Right lobe of liver (tissue), 6 donors: ENCODE measurements at regions of chr6 and their contacts with region 1.

Region 1: GRCh38 chr6:35342258-35343091 is at the start of gene PPARD:
- DNase-seq: peak; percentile 99
- ATAC-seq: peak; percentile 98 to 100 (median 99)
- H3K4me3 ChIP-seq: peak within 1 kb of the TSS; percentile 88 to 94 (median 92)
- H3K27ac ChIP-seq: peak within 1 kb of the TSS; percentile 84 to 95 (median 85)
- H3K4me1 ChIP-seq: peaks cover 0 to 16% (median 6%) of the 10 kb centered on the region in 4 donors
- H3K27me3 ChIP-seq: no peaks in the 10 kb centered on the region
- CTCF ChIP-seq: peak; percentile 98 to 100 (median 99)
- POLR2A ChIP-seq: peak; percentile 93
- total RNA-seq, gene PPARD: 5.2 to 18.8 (median 5.9) TPM

Region 2: GRCh38 chr6:35402136-35402855 is 59.8 kb after region 1 on chr6:
- intact Hi-C with region 1: no loop called
- DNase-seq: peak; percentile 57 to 90 (median 77)
- ATAC-seq: peak; percentile 71 to 88 (median 86)
- H3K4me3 ChIP-seq: peak overlapping the region in 1 of 3 donors; percentile 16
- H3K27ac ChIP-seq: peak overlapping the region in 2 of 3 donors; percentile 25 to 57
- H3K4me1 ChIP-seq: peaks cover 0 to 35% (median 19%) of the 10 kb centered on the region in 4 donors
- H3K27me3 ChIP-seq: no peaks in the 10 kb centered on the region
- CTCF ChIP-seq: no peak
- POLR2A ChIP-seq: no peak

Region 3: DNA sequence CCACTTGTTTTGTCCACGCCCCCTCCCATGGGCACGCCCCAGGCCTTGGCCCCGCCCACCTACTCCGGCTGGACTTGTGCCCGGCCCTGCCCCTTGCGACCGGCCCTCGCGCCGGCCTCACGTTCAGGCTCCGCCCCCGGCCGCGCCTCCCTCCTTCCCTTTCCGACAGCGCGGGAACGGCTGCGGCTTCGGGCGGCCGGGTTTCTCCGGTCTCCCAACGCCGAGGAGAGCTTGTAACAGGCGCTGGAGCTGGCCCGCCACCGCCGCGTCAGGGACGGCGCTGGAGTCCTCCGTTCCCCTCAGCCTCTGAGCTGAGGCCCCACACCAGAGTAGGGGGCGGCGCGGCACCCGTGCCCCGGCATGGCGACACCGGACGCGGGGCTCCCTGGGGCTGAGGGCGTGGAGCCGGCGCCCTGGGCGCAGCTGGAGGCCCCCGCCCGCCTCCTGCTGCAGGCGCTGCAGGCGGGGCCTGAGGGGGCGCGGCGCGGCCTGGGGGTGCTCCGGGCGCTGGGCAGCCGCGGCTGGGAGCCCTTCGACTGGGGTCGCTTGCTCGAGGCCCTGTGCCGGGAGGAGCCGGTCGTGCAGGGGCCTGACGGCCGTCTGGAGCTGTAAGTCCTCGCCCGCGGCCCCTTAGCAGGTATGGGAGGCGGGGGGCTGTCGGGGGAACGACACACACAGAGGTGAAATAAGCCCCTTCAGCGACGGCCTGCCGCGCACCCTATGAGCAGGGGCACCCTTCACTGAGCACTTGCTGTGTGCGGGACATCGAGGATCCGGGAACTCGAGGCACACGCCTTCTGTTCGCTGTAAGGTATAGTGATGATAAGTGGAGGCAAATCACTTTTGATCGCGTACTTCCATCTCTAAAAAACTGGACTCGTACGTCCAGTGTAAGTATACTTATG is 110.0 kb after region 1 on chr6 and contains the start of gene FANCE:
- intact Hi-C with region 1: loop called (anchors 5 kb)
- DNase-seq: peak; percentile 95 to 97 (median 96)
- ATAC-seq: peak; percentile 96 to 98 (median 96)
- H3K4me3 ChIP-seq: peak within 1 kb of the TSS; percentile 64 to 88 (median 64)
- H3K27ac ChIP-seq: no peak within 1 kb of the TSS
- H3K4me1 ChIP-seq: peaks cover 0 to 21% (median 0%) of the 10 kb centered on the region in 4 donors
- H3K27me3 ChIP-seq: no peaks in the 10 kb centered on the region
- CTCF ChIP-seq: no peak
- POLR2A ChIP-seq: peak; percentile 16
- total RNA-seq, gene FANCE: 0.44 to 1.7 (median 0.95) TPM